ENCODE measurements at regions of chr16 and their contacts with region 1.

Region 1: GRCh38 chr16:58574895-58575294 is 54.7 kb downstream of the CNOT1 start:
- DNase-seq: no peak
- ATAC-seq: no peak
- H3K4me3 ChIP-seq: no peak overlapping the region
- H3K27ac ChIP-seq: no peak overlapping the region
- H3K4me1 ChIP-seq: no peaks in the 10 kb centered on the region
- H3K27me3 ChIP-seq: no peaks in the 10 kb centered on the region
- CTCF ChIP-seq: no peak
- EP300 ChIP-seq: no peak
- POLR2A ChIP-seq: no peak
- RAD21 ChIP-seq: no peak

Region 2: GRCh38 chr16:58384113-58385055 is 190.5 kb before region 1 on chr16:
- CTCF ChIA-PET with region 1: no interaction called
- POLR2A ChIA-PET with region 1: no interaction called
- in situ Hi-C with region 1: no loop called
- intact Hi-C with region 1: no loop called
- DNase-seq: no peak
- ATAC-seq: no peak
- H3K4me3 ChIP-seq: no peak overlapping the region
- H3K27ac ChIP-seq: no peak overlapping the region
- H3K4me1 ChIP-seq: no peaks in the 10 kb centered on the region
- H3K27me3 ChIP-seq: 0 out of 5 replicates have a peak, but pooled peaks cover 0 to 4% of the 10 kb centered on the region in 2 experiments
- CTCF ChIP-seq: no peak
- EP300 ChIP-seq: no peak
- POLR2A ChIP-seq: no peak
- RAD21 ChIP-seq: no peak

Region 3: GRCh38 chr16:58518083-58518979 is 56.6 kb before region 1 on chr16:
- CTCF ChIA-PET with region 1: no interaction called
- POLR2A ChIA-PET with region 1: no interaction called
- in situ Hi-C with region 1: no loop called
- intact Hi-C with region 1: no loop called
- DNase-seq: no peak
- ATAC-seq: no peak
- H3K4me3 ChIP-seq: no peak overlapping the region
- H3K27ac ChIP-seq: no peak overlapping the region
- H3K4me1 ChIP-seq: peaks cover 32% of the 10 kb centered on the region
- H3K27me3 ChIP-seq: no peaks in the 10 kb centered on the region
- CTCF ChIP-seq: no peak
- EP300 ChIP-seq: no peak
- POLR2A ChIP-seq: peak in 1 of 2 experiments; percentile 40; a peak in 1 of 4 replicates
- RAD21 ChIP-seq: no peak

Region 4: DNA sequence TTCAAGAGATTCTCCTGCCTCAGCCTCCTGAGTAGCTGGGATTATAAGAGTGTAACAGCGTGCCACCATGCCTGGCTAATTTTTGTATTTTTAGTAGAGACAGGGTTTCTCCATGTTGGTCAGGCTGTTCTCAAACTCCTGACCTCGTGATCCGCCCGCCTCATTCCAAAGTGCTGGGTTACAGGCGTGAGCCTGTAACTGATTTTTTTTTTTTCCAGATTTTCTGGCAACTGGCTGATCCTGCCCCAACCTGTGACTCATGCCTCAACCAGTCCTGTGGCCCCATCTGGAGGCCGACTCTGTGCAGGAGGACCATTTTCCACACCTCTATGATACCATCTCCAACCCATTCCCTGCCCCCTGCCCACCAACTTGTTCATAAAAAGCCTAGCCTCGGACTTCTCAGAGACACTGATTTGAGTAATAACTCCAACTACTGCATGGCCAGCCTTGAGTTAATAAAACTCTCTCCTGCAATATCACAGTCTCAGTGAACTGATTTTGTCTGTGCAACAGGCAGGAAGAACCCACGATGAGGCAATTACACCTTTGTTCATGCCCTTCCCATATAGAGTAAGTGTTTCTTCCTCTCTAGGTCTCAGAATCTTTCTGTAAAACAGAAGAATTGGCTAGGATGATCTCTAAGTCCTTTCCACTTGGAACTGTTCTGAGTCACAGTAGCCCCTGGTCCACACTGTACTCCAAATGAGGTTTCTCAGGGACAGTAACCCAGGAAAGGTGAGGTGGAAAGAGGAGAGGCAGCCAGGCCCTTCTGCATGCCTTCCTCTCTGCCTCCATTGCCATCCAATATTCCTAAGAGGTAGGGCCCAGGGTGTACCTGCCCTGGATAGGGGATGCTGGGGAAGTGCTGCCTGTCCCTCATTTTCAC is 63.5 kb after region 1 on chr16:
- CTCF ChIA-PET with region 1: no interaction called
- POLR2A ChIA-PET with region 1: no interaction called
- in situ Hi-C with region 1: no loop called
- intact Hi-C with region 1: loop called (anchors 5 kb)
- DNase-seq: peak; percentile 79
- ATAC-seq: peak; percentile 94
- H3K4me3 ChIP-seq: no peak overlapping the region
- H3K27ac ChIP-seq: no peak overlapping the region
- H3K4me1 ChIP-seq: peaks cover 50% of the 10 kb centered on the region
- H3K27me3 ChIP-seq: no peaks in the 10 kb centered on the region; a peak in 1 of 5 replicates
- CTCF ChIP-seq: peak; percentile 89
- EP300 ChIP-seq: no peak
- POLR2A ChIP-seq: no peak
- RAD21 ChIP-seq: peak; percentile 88